ENCODE measurements at regions of chr9 and their contacts with region 1.

Region 1: DNA sequence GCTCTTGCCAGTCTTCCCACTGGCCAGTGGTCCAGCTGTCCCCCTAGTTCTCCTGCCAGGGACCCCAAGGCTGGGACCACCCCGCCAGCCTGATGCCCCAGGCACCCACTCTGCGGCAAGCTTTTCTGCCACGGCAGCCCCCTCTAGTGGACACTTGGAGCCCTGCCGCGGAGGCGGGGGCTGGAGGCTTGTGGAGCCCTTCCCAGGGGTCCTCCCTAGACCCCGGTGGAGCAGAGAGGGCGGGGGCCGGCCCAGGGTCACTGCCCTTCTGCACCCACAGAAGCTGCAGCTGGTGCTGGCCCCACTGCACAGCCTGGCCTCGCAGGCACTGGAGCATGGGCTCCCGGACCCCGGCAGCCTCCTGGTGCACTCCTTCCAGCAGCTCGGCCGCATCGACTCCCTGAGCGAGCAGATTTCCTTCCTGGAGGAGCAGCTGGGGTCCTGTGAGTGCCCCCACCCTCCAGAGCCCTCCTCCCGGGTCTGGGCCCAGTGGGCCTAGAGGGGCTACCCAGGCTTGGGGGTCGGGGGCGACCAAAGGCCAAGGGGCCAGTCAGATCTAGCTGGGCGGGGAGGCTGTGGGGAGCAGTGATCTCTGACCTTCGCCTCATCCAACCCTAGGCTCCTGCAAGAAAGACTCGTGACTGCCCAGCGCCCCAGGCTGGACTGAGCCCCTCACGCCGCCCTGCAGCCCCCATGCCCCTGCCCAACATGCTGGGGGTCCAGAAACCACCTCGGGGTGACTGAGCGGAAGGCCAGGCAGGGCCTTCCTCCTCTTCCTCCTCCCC is 9.1 kb downstream of the EGFL7 start:
- DNase-seq: peak; percentile 72
- H3K27ac ChIP-seq: peak overlapping the region; percentile 38
- CTCF ChIP-seq: peak; percentile 99

Region 2: DNA sequence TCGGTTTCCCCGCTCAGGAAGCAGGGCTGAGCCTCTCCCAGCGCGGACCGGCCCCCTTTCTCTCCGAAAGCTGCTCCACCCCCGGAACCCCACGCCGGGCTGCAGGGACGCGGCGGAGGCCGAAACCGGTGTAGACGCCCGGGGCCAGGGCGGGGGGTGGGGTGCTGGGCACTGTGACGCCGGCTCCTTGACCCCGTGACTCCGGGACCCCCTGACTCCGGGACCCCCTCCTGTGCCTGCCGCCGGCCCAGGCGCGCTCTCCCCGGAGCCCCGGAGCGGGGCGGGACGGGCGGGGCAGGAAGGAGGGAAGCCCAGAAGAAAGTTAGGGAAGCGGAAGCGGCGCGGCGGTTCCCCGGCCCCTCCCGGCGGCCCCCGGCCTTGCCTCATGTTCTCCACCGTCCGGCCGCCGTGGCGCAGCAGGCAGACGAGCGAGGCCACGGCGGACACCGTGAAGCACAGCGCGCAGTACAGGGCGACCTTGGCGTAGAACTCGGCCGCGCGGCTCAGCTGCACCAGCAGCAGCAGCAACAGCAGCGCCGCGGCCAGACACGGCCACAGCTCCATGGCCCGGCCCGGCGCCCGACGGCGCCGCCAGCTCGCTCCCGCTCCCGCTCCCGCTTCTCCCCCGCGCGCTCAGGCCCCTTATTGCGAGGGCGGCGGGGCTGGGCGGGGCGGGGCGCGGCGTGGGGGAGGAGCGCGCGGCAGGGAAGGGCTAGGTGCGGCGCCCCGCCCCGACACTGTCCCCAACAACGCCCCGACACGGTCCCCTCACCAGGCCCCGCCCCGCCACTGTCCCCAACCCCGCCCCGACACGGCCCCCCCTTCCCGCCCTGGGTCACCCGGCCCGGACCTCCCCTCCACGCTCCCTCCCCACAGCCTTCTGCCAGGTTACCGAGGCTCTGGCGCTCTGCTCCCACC is 15.2 kb after region 1 on chr9 and contains the start of gene AGPAT2:
- CTCF ChIA-PET with region 1: interaction called, 35 read pairs
- POLR2A ChIA-PET with region 1: no interaction called
- DNase-seq: peak; percentile 81
- H3K27ac ChIP-seq: peak within 1 kb of the TSS; percentile 84
- CTCF ChIP-seq: no peak

Region 3: DNA sequence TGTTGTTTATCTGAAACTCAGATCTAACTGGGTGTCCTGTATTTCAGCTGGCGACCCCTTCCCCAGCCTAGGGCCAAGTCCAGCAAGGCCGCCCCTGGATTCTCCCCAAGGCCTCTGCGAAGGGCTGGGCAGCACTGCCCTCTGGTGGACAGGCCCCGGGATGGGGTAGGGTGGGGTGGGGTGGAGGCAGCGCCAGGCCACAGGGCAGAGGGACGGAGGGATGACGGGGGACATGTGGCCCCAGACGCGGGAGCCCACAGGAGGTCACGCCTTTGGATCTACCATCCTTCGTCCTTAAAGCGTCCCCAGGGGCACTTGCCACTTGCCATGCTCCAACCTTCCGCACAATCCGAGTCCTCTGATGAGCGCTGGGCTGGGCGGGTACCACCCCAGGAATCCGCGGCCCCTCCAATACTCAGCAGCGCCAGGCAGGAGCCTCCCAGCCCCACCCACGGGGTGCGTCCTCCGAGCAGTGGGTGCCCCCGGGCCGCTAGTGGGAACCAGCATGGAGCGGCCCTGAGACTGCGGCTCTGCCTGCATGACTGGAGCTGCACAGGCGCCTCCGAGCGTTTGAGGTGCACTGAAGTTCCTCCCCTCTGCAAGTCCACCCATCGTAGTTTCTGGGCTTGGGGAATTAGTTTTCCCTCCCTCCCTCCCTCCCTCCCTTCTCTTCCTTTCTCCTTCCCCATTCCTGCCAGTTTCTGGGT is 22.6 kb after region 1 on chr9:
- CTCF ChIA-PET with region 1: interaction called, 28 read pairs
- POLR2A ChIA-PET with region 1: no interaction called
- DNase-seq: peak; percentile 87
- H3K27ac ChIP-seq: peak overlapping the region; percentile 84
- CTCF ChIP-seq: peak; percentile 89

Region 4: DNA sequence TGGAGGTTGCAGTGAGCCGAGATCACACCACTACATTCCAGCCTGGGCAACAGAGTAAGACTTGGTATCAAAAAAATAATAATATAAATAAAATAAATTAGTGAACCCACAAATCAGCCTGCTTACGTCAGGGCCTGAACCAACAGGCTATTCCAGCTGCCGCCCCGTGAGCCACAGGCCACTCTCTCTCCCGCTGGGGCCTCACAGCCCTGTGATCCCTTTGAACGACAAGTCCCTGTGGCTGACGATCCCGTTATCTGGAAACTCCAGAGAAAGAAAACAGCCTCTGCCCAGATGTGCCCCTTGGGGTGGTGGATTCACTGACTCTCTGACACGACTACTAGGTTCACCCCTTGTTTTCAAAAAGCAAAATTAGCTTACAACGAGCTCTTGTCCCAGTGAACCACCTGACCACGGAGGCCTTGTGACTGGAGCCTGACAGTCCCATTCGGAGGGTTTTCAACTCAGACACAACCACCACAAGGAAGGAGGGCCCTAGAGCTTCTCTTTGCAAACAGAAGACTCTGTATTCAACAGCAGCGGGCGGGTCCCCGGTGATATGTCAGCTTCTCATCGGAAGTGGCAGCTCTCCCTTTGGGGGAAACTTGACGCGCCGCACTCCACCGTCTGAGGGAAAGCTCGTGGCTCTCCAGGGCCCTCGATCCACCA is 36.1 kb after region 1 on chr9:
- CTCF ChIA-PET with region 1: interaction called, 11 read pairs
- POLR2A ChIA-PET with region 1: no interaction called
- DNase-seq: no peak
- H3K27ac ChIP-seq: no peak overlapping the region
- CTCF ChIP-seq: no peak

Region 5: GRCh38 chr9:136721339-136722092 is 49.7 kb after region 1 on chr9:
- CTCF ChIA-PET with region 1: interaction called, 29 read pairs
- POLR2A ChIA-PET with region 1: no interaction called
- DNase-seq: peak; percentile 99
- H3K27ac ChIP-seq: peak overlapping the region; percentile 93
- CTCF ChIP-seq: no peak

Region 6: GRCh38 chr9:136728080-136728547 is 56.3 kb after region 1 on chr9:
- CTCF ChIA-PET with region 1: interaction called, 29 read pairs
- POLR2A ChIA-PET with region 1: interaction called, 3 read pairs
- DNase-seq: peak; percentile 95
- H3K27ac ChIP-seq: peak overlapping the region; percentile 93
- CTCF ChIP-seq: peak; percentile 99

Region 7: GRCh38 chr9:136790927-136791641 is 119.2 kb after region 1 on chr9 and contains the start of gene TMEM141:
- CTCF ChIA-PET with region 1: no interaction called
- POLR2A ChIA-PET with region 1: no interaction called
- DNase-seq: peak; percentile 100
- H3K27ac ChIP-seq: peak within 1 kb of the TSS; percentile 89
- CTCF ChIP-seq: no peak

Measured in RWPE1 (cell line).